H1 (cell line): ENCODE measurements at regions of chr11 and their contacts with region 1.

Region 1: DNA sequence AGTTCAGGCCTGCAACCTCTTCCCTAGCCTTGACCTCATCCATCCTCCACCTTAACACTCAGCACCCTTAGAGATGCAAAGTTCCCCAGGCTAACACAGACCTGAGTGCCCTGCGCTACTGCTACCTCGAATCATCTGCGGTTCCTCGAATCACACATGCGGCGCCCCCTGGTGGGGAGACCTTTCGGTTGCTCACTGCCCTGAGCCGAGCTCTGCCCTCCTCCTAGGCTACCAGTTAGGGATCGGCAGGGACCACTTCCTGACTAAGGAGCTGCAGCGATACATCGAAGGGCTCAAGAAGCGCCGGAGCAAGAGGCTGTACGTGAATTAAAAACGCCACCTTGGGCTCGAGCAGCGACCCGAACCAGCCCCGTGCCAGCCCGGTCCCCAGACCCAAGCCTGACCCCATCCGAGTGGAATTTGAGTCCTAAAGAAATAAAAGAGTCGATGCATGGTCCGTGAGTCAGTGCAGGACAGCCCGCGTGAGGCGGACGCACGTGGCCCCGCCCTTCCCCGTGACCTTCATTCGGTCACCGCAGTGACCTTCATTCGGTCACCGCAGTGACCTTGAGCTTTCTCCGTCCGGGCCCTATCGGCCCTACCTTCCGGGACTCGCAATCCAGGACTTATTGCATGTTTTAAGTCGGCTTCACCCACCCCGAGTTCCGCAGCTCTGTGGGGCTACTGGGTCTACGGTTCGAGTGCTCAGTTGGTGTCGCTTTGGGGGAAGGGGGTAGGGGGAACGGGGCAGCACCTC is 830 bp upstream of the ESRRA start:
- DNase-seq: peak; percentile 86 to 99
- H3K4me3 ChIP-seq: peak overlapping the region; percentile 48 to 71 (median 58)
- H3K27ac ChIP-seq: peak overlapping the region; percentile 87
- H3K4me1 ChIP-seq: peaks cover 3 to 21% (median 18%) of the 10 kb centered on the region in 4 experiments; a peak in 6 of 7 replicates
- H3K27me3 ChIP-seq: peaks cover 13 to 30% (median 18%) of the 10 kb centered on the region in 4 experiments
- CTCF ChIP-seq: peak in 2 of 3 experiments; percentile 83 to 95; a peak in 3 of 4 replicates
- EP300 ChIP-seq: no peak
- POLR2A ChIP-seq: peak in 1 of 2 experiments; percentile 95; a peak in 2 of 3 replicates
- RAD21 ChIP-seq: peak; percentile 54 to 69

Region 2: GRCh38 chr11:64263021-64263946 is 41.2 kb before region 1 on chr11:
- CTCF ChIA-PET with region 1: interaction called, 168 read pairs
- POLR2A ChIA-PET with region 1: interaction called, 57 read pairs
- DNase-seq: no peak
- H3K4me3 ChIP-seq: no peak overlapping the region
- H3K27ac ChIP-seq: 0 out of 2 replicates have a peak overlapping the region, but pooled peaks have one; percentile 4
- H3K4me1 ChIP-seq: peaks cover 0 to 3% (median under 1%) of the 10 kb centered on the region in 4 experiments; a peak in 4 of 7 replicates
- H3K27me3 ChIP-seq: no peaks in the 10 kb centered on the region
- CTCF ChIP-seq: no peak
- EP300 ChIP-seq: no peak
- POLR2A ChIP-seq: no peak
- RAD21 ChIP-seq: no peak; a peak in 1 of 4 replicates

Region 3: DNA sequence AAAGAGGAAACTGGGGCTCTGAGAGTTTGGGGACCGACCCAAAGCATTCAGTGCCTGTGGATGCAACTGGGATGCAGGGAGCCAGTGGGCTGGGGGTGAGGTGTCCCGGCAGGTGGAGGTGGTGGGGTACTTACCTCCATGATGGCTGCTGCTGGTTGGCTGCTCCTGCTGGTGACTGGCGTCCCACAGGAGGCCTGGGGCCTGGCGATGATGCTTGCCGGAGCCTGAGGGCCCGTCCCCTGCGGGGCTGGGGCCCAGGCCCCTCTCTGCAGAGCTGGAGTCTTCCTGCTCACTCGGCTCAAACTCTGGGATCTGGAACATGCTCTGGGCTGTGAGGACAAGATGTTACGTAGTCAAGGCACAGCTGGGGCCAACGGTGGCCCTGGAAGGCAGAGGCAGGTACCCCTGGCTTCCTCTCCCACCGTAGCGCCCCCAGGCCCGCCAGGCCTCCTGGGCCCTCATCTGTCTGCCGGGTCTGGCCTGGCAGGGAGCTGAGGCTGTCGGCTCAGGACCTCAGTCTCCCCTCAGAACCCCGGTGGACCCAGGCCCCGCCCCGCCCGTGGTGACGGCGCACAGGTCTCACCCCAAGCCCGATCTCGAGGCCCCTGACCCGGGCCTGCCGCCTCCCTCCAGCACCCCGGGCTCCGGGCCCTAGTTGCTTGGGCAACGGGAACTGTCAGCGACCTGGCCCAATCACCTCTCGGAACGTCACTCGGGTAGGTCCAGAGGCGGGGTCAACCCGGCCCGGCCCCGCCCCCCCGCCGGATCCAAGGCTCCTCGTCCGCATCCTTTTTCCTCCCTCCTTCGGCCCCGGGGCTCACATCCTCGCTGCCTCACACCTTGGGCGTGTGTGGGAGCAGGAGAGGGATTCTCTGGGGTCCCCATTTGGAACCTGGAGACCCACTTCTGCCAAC is 20.2 kb before region 1 on chr11 and contains the start of gene BAD:
- CTCF ChIA-PET with region 1: interaction called, 168 read pairs
- POLR2A ChIA-PET with region 1: interaction called, 20 read pairs
- DNase-seq: peak in 1 of 2 experiments; percentile 96
- H3K4me3 ChIP-seq: peak within 1 kb of the TSS; percentile 49 to 70 (median 69)
- H3K27ac ChIP-seq: peak within 1 kb of the TSS; percentile 68; the same call in 1 of the 2 replicates
- H3K4me1 ChIP-seq: peaks cover 0 to 8% (median 4%) of the 10 kb centered on the region in 4 experiments; a peak in 4 of 7 replicates
- H3K27me3 ChIP-seq: peaks cover 0 to 7% (median 3%) of the 10 kb centered on the region in 4 experiments; a peak in 3 of 7 replicates
- CTCF ChIP-seq: no peak
- EP300 ChIP-seq: no peak
- POLR2A ChIP-seq: peak in 1 of 2 experiments; percentile 25; a peak in 1 of 3 replicates
- RAD21 ChIP-seq: no peak
- total RNA-seq, gene BAD: 23.1 and 25.3 TPM in 2 replicates

Region 4: GRCh38 chr11:64317957-64318693 is 13.6 kb after region 1 on chr11 and contains the start of gene PRDX5:
- CTCF ChIA-PET with region 1: interaction called, 614 read pairs
- POLR2A ChIA-PET with region 1: interaction called, 34 read pairs
- DNase-seq: peak in 1 of 2 experiments; percentile 90
- H3K4me3 ChIP-seq: peak within 1 kb of the TSS; percentile 73 to 80 (median 77)
- H3K27ac ChIP-seq: peak within 1 kb of the TSS; percentile 91
- H3K4me1 ChIP-seq: peaks cover 1 to 12% (median 3%) of the 10 kb centered on the region in 4 experiments; a peak in 6 of 7 replicates
- H3K27me3 ChIP-seq: no peaks in the 10 kb centered on the region
- CTCF ChIP-seq: peak in 1 of 3 experiments; percentile 51; a peak in 2 of 4 replicates
- EP300 ChIP-seq: no peak
- POLR2A ChIP-seq: no peak
- RAD21 ChIP-seq: peak; percentile 39 to 62
- total RNA-seq, gene PRDX5: 201 and 225 TPM in 2 replicates

Region 5: GRCh38 chr11:64516226-64516625 is 211.7 kb after region 1 on chr11:
- CTCF ChIA-PET with region 1: no interaction called
- POLR2A ChIA-PET with region 1: no interaction called
- DNase-seq: no peak
- H3K4me3 ChIP-seq: no peak overlapping the region
- H3K27ac ChIP-seq: no peak overlapping the region
- H3K4me1 ChIP-seq: no peaks in the 10 kb centered on the region
- H3K27me3 ChIP-seq: peaks cover 0 to 19% (median 9%) of the 10 kb centered on the region in 4 experiments; a peak in 4 of 7 replicates
- CTCF ChIP-seq: peak; percentile 26 to 77 (median 52)
- EP300 ChIP-seq: no peak
- POLR2A ChIP-seq: no peak
- RAD21 ChIP-seq: peak; percentile 27 to 49; a peak in 3 of 4 replicates